ENCODE measurements at regions of chr2 and their contacts with region 1.

Region 1: GRCh38 chr2:45935791-45936622 is 284.5 kb downstream of the PRKCE start:
- DNase-seq: peak; percentile 97
- H3K4me3 ChIP-seq: no peak overlapping the region
- H3K27ac ChIP-seq: peak overlapping the region in 1 of 3 donors; percentile 20
- H3K4me1 ChIP-seq: peaks cover 0 to 16% of the 10 kb centered on the region in 2 donors
- H3K27me3 ChIP-seq: no peaks in the 10 kb centered on the region
- CTCF ChIP-seq: peak; percentile 28 to 92 (median 80)
- POLR2A ChIP-seq: no peak

Region 2: DNA sequence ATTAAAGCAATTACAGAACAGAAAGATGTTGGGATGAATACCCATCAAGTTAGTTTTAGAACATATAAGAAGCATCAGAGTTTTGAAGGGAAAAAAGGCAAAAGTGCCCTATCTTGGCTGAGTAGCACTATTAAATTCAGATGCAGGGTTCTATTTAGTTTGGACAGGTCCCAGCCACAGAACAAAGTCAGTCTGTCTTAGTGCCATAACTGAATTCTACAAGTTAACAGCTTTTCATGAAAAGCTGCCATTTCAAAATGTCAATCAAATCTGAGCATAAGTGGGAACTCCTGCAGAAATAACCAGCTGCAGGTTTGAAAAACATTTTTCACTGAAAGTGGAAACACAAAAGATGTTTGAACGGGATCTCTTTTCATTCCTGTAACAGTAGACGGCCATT is 485.4 kb before region 1 on chr2:
- intact Hi-C with region 1: no loop called
- DNase-seq: no peak
- H3K4me3 ChIP-seq: no peak overlapping the region
- H3K27ac ChIP-seq: no peak overlapping the region
- H3K4me1 ChIP-seq: no peaks in the 10 kb centered on the region
- H3K27me3 ChIP-seq: no peaks in the 10 kb centered on the region
- CTCF ChIP-seq: no peak
- POLR2A ChIP-seq: no peak

Region 3: DNA sequence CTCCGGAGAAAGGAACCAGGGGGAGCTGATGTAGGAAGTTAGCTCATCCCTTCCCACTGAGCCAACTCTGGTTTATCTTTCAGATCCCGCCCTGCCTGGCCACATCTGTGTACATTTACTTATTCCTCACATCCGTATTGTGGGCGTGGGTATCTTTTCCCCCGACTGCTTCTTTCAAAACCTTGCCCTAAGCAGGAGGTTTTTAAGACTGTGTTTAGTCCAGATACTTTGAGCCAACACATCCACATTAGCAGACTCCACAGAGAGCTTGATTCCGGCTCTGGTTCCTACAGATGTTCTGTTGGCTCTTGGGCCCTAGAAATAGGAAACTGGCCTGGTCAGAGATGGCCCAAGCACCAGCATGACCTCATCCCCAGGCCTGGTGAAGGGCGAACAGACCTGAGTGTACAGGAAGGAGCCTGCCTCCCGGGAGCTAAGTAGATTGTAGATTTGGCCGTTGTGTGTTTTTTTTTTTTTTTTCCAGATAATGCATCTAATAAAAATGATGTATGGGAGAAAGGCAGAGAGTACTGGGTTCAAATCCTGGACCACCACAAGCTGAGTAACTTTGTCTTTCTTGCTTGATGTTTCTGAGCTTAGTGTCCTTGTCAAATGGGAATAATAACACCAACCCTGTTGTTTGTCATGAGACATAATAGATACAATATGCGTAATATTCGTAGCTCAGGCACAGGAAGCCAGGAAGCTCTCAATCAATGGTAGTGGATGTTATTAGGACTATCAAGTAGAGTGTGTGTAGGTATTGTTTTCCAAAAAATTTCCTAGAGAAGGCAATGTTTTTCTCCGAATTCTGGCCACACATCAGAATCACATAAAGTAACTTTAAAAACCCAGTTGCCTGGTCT is 192.2 kb before region 1 on chr2:
- intact Hi-C with region 1: no loop called
- DNase-seq: peak in 1 of 2 donors; percentile 5
- H3K4me3 ChIP-seq: no peak overlapping the region
- H3K27ac ChIP-seq: no peak overlapping the region
- H3K4me1 ChIP-seq: no peaks in the 10 kb centered on the region
- H3K27me3 ChIP-seq: no peaks in the 10 kb centered on the region
- CTCF ChIP-seq: no peak
- POLR2A ChIP-seq: no peak

Region 4: GRCh38 chr2:45778720-45779171 is 157.3 kb before region 1 on chr2:
- intact Hi-C with region 1: loop called (anchors 5 kb)
- DNase-seq: peak; percentile 67 to 68
- H3K4me3 ChIP-seq: no peak overlapping the region
- H3K27ac ChIP-seq: no peak overlapping the region
- H3K4me1 ChIP-seq: no peaks in the 10 kb centered on the region
- H3K27me3 ChIP-seq: no peaks in the 10 kb centered on the region
- CTCF ChIP-seq: peak; percentile 58 to 83 (median 74)
- POLR2A ChIP-seq: no peak

Region 5: GRCh38 chr2:46002507-46002883 is 66.5 kb after region 1 on chr2:
- intact Hi-C with region 1: no loop called
- DNase-seq: peak; percentile 59 to 61
- H3K4me3 ChIP-seq: no peak overlapping the region
- H3K27ac ChIP-seq: peak overlapping the region; percentile 88 to 98 (median 95)
- H3K4me1 ChIP-seq: peaks cover 30 to 36% of the 10 kb centered on the region in 2 donors
- H3K27me3 ChIP-seq: no peaks in the 10 kb centered on the region
- CTCF ChIP-seq: no peak
- POLR2A ChIP-seq: no peak

Measured in thyroid gland (tissue), 4 donors.